Activated CD4-positive, alpha-beta T cell treated with anti-CD3 and anti-CD28 coated beads for 36 hours (primary cell): ENCODE measurements at regions of chr2 and their contacts with region 1.

Region 1: GRCh38 chr2:7984693-7985353 is 697.0 kb upstream of the ID2 start:
- DNase-seq: no peak
- ATAC-seq: peak; percentile 96
- H3K4me3 Mint-ChIP-seq: peak overlapping the region; percentile 44
- H3K27ac Mint-ChIP-seq: peak overlapping the region; percentile 95
- H3K4me1 Mint-ChIP-seq: peaks cover 33% of the 10 kb centered on the region
- H3K27me3 Mint-ChIP-seq: no peaks in the 10 kb centered on the region

Region 2: DNA sequence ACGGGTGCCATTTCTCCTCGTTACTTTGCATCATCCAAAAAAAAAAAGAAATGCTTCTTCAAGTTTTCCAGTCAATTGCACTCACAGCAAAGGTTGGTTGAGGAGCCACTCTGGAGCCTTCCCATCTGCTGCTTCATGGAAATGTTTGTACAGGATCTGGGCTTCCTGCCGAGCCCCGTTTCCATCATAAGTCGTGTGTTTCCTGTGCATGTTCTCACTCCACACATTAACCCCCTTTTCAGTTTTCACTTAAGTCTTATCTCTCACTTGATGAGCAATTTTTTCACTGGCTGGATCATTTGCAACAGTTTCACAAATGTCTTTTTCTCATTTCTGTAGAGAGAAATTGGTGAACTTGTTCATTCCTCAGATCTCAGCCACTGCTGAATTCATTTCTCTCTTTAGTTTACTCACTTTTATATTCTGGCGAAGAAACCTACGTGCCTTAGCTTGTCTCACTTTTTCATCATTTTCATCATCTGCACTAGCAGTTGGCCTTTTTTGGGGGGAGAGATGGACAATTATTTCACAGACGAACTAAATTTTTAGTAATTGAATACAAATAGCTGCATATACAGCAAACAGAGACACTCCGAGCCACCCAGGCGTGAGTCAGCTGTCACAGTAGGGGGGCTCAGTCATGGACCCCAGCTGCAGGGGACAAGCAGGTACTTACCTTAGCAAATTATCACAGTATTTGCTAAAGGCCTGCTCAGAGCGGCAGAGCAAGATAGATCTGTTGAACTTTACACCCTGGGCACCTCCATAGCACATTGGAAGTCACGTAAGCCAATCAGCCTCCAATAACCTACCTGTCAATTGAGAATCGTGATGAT is 53.8 kb before region 1 on chr2:
- CTCF ChIA-PET with region 1: no interaction called
- POLR2A ChIA-PET with region 1: no interaction called
- intact Hi-C with region 1: loop called (anchors 2 to 5 kb)
- DNase-seq: peak; percentile 56
- ATAC-seq: peak; percentile 80
- H3K4me3 Mint-ChIP-seq: peak overlapping the region; percentile 0
- H3K27ac Mint-ChIP-seq: peak overlapping the region; percentile 93
- H3K4me1 Mint-ChIP-seq: peaks cover 33% of the 10 kb centered on the region
- H3K27me3 Mint-ChIP-seq: no peaks in the 10 kb centered on the region

Region 3: DNA sequence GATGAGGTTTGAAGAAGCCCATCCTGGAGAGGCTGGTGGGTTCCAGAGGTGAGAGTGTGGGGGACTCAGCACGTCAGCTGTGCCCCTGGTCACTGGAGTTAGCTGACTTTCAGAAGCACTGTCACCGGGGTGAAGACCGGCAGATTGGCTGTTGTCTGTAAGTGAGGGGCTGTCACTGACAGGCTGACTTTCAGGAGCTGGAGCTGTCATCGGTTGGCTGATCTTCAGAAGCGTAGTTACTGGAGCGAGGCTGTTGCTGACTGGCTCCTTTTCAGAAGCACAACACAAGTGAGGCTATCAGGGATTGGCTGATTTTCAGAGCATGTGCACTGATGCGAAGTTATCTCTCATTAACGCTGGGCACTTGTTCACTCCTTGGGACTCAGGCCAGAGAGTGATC is 41.4 kb before region 1 on chr2:
- CTCF ChIA-PET with region 1: interaction called, 3 read pairs
- POLR2A ChIA-PET with region 1: no interaction called
- intact Hi-C with region 1: loop called in 1 of 2 experiments (anchors 1 kb)
- DNase-seq: no peak
- ATAC-seq: no peak
- H3K4me3 Mint-ChIP-seq: no peak overlapping the region
- H3K27ac Mint-ChIP-seq: no peak overlapping the region
- H3K4me1 Mint-ChIP-seq: peaks cover 26% of the 10 kb centered on the region
- H3K27me3 Mint-ChIP-seq: no peaks in the 10 kb centered on the region

Region 4: DNA sequence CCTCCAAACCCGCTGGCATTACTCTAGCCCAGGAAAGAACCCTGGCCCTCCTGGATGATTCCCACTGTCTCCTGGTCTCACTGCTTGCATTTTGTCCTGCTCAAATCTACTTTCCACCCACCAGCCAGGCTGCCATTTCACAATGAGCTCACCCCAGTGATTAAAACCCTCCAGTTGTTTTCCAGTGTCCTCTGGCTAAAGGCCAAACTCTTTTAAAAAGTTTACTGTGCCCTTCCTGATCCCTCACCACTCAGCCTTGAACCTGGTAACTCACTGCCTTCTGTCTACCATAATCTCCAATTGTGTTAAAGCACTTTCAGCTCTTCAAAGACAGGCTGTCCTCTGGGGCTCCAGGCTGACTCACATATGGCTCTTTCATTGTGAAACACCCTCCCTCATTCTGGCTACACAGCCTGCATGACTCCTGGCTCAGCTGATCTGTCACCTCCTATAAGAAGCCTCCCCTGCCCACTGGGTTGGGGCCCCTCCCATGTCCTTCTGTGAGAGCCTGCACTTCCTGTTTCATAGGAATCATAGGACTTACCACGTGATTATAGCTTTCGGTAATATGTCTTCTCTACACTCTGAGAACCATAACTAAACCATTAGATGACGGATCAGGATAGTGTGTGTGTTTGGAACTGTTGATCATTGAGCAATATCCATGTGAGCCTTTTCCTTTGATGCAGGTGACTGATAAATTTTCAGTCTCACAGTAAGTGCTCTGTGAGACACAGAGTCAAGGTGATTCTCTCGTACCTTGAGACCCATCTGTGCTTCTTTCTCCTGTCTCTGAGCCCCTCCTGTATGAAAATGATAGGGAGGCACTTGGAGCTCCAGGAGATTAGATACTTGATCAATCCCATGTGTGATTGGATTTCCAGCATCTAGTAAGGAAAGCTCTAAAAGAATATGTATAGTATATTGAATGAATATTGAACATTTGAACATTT is 106.2 kb after region 1 on chr2:
- CTCF ChIA-PET with region 1: no interaction called
- POLR2A ChIA-PET with region 1: no interaction called
- intact Hi-C with region 1: loop called in 1 of 2 experiments (anchors 1 kb)
- DNase-seq: peak; percentile 90
- ATAC-seq: peak; percentile 100
- H3K4me3 Mint-ChIP-seq: no peak overlapping the region
- H3K27ac Mint-ChIP-seq: no peak overlapping the region
- H3K4me1 Mint-ChIP-seq: no peaks in the 10 kb centered on the region
- H3K27me3 Mint-ChIP-seq: no peaks in the 10 kb centered on the region